Activated T-helper 1 cell treated with anti-CD3 and anti-CD28 coated beads, Interleukin-12 subunit alpha, Interleukin-12 subunit beta, Interleukin-2, Interleukin-4 antibody, amounts not matched to agents 30 ng/mL and 10 ng/mL and 1 ng/mL, durations not matched to agents 14 hours and 24 hours and 36 hours (primary cell): ENCODE measurements at regions of chr20 and their contacts with region 1.

Region 1: GRCh38 chr20:3470627-3471396 is at the start of gene ATRN:
- DNase-seq: peak; percentile 84
- H3K4me3 Mint-ChIP-seq: peak within 1 kb of the TSS; percentile 91
- H3K27ac Mint-ChIP-seq: peak within 1 kb of the TSS; percentile 55
- H3K4me1 Mint-ChIP-seq: peaks cover 28% of the 10 kb centered on the region
- H3K27me3 Mint-ChIP-seq: peaks cover 12% of the 10 kb centered on the region
- total RNA-seq, gene ATRN: 10.9 and 11.9 TPM in 2 replicates

Region 2: DNA sequence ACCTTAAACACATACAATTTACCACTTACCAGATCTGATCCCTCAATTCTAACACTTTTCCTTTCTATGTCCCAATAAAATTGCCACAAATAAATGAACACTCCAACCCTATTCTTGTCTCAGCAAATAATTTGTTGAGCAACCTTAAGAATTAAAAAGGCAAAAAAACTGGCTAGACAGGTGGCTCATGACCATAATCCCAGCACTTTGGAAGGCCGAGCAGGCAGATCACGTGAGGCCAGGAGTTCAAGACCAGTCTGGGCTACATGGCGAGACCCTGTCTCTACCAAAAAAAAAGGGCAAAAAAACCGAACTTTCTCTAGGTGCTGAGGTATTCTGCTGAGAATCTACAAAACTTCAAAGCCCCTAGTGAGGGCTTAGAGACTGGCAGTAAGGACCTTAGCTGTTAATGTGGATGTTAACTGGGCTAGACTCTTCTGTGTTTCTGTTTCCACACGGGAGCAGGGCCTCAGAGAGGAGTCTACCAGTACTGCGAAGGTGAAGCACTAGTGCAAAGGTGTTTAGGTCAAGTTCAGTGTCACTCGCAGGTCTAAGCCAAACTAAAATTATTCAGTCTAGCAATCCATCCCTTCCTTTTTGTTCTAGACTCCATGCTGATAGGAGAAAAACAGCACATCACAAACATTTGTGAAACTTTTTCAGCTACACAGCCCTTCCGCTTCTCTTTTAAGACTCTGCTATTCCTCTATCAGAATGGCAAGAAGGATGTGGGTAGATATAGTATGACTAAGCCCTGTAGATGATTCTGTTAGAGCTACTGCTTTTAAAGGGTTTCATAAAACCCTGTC is 313.8 kb before region 1 on chr20:
- intact Hi-C with region 1: loop called (anchors 5 kb)
- DNase-seq: no peak
- H3K4me3 Mint-ChIP-seq: peak overlapping the region; percentile 78
- H3K27ac Mint-ChIP-seq: peak overlapping the region; percentile 90
- H3K4me1 Mint-ChIP-seq: peaks cover 44% of the 10 kb centered on the region
- H3K27me3 Mint-ChIP-seq: no peaks in the 10 kb centered on the region

Region 3: DNA sequence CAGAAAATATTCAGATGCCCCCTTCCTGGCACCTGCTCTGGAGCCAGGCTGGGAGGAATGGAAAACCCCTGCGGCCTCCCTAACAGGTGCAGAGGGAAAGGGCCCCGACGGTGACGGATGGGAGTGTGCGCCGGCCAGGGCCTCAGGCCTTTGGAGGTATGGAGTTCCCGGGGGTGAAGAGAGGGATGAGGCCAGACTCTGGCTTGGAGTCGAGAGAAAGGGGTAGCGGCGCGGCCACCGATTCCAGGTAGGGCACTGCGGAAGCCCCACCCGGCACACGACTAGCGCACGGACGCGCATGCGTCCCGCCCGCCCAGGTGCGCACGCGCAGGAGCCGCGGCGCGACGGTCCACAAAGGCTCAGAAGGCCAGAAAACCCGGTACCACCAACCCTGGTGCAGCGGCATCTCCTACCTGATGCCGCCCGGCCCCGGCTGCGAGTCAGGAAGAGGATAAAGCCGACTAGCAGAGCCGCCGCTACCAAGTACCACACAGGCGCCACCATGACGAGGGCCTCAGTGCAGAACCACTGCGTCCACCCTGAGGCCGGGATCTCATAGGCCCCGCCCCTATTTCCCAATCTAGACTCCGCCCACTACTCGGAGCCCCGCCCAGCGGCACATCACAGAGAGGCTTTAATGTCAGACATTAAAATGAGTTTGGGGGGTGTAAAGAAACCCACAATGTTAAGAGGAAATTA is 266.5 kb before region 1 on chr20 and contains the start of gene DDRGK1:
- intact Hi-C with region 1: loop called (anchors 10 kb)
- DNase-seq: peak; percentile 86
- H3K4me3 Mint-ChIP-seq: peak within 1 kb of the TSS; percentile 96
- H3K27ac Mint-ChIP-seq: peak within 1 kb of the TSS; percentile 97
- H3K4me1 Mint-ChIP-seq: peaks cover 23% of the 10 kb centered on the region
- H3K27me3 Mint-ChIP-seq: no peaks in the 10 kb centered on the region
- total RNA-seq, gene DDRGK1: 67.5 and 72.3 TPM in 2 replicates

Region 4: DNA sequence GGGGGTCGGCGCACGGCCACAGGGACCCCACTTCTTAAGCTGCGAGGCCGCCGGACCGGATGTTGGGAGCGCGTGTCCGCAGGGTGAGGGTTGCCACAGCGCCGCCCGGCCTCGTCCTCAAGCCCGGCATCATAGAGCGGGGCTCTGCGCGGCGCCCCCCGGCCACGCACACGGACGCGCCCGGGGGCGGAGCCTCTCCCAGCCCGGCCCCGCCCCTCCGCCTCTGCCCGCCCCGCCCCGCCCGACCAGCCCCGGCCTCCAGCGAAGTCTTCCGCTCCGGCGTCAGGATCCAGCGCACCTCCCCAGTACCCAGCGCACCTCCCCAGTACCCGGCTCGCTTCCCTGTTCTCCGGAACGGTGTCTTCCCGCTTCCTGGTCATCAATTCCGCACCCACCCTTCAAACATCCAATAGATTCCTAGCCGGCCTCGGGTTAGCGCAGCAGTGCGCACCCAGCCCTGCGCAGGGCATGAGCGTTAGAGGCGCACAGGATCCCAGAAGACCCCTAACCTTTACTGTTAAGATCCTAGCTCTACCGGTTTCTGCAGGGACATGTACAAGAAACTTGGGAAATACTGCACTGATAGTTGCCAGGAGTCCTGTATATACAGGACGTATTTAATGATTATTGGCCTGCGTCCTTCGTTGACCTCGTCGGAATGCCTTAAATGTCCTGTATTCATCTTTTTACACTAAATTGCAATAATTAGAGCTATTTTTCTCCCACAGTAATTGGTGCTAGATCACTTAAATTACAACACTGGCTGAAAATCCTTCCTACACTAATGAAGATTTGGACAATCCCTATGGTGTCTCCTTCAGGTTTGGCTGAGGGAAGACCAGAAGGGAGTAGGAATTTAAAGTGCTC is 62.8 kb before region 1 on chr20:
- intact Hi-C with region 1: loop called (anchors 1 kb)
- DNase-seq: peak; percentile 63
- H3K4me3 Mint-ChIP-seq: peak overlapping the region; percentile 95
- H3K27ac Mint-ChIP-seq: peak overlapping the region; percentile 93
- H3K4me1 Mint-ChIP-seq: peaks cover 32% of the 10 kb centered on the region
- H3K27me3 Mint-ChIP-seq: peaks cover 26% of the 10 kb centered on the region

Region 5: DNA sequence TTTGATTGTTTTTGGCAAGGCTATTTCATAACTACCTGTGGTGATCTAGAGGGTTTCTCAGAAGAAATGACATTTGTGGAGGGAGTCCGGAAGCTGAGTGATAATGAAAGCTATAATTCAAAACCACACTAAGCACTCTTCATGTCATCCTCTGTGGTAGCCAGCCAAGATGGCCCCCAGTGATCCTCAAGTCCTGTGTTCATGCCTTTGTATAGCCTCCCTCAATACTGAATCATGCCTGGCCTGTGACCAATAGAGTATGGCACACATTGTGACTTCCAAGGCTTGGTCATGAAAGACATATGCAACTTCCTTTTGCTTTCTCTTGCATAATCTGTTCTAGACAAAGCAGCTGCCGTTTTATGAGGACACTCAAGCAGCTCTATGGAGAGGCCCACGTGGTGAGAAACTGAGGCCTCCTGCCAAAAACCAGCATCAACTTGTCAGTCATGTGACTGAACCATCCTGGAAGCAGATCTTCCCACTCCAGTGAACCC is 50.6 kb before region 1 on chr20:
- intact Hi-C with region 1: loop called (anchors 1 kb)
- DNase-seq: peak; percentile 62
- H3K4me3 Mint-ChIP-seq: peak overlapping the region; percentile 40
- H3K27ac Mint-ChIP-seq: peak overlapping the region; percentile 80
- H3K4me1 Mint-ChIP-seq: peaks cover 10% of the 10 kb centered on the region
- H3K27me3 Mint-ChIP-seq: peaks cover 4% of the 10 kb centered on the region

Region 6: GRCh38 chr20:3532089-3532615 is 61.3 kb after region 1 on chr20:
- intact Hi-C with region 1: no loop called
- DNase-seq: no peak
- H3K4me3 Mint-ChIP-seq: no peak overlapping the region
- H3K27ac Mint-ChIP-seq: no peak overlapping the region
- H3K4me1 Mint-ChIP-seq: no peaks in the 10 kb centered on the region
- H3K27me3 Mint-ChIP-seq: no peaks in the 10 kb centered on the region

Region 7: GRCh38 chr20:3811467-3812258 is 340.9 kb after region 1 on chr20:
- intact Hi-C with region 1: loop called (anchors 10 kb)
- DNase-seq: peak; percentile 77
- H3K4me3 Mint-ChIP-seq: peak overlapping the region; percentile 75
- H3K27ac Mint-ChIP-seq: peak overlapping the region; percentile 92
- H3K4me1 Mint-ChIP-seq: peaks cover 65% of the 10 kb centered on the region
- H3K27me3 Mint-ChIP-seq: no peaks in the 10 kb centered on the region

Region 8: DNA sequence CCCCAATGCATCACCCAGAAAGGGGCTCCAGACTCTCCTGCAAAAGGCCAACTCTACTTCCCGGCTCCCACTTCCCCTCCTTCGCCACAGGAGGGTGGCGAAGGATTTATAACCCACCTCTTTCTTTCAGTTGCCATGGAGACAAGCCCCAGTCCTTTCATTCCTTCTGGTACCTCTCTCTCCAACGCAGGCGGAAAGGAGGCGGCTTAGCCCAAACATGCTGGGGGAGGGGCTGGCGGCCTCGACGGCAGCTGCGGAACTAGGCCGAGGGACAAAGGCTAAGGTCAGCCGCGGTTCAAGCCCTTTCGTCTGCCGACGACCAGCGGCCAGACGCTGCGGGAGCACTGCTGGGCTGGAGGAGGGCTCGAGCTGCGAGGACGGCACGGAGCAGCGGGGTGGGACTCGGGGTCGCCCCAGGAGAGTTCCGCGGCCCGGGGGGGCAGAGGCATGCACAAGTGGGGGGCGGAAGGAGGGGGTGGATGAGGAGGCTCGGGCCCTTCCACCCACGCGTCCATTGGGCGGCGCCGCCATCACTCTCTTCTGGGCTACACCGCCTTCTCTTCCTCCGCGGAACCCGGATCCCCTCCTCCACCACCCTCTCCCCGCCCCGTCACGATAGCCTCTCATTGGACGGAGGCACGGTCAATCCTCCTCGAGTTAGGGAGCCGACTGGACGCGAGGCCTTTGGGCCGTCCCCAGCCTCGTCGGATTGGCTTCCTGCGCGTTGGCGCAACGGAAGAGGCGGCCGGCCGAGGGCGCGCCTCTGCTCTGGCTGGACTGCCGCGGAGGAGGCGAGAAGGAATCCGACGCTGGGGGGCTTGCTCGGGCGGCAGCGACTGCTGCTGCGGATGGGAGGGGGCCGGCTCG is 418.0 kb after region 1 on chr20 and contains the start of gene PANK2:
- intact Hi-C with region 1: no loop called
- DNase-seq: peak; percentile 98
- H3K4me3 Mint-ChIP-seq: peak within 1 kb of the TSS; percentile 100
- H3K27ac Mint-ChIP-seq: peak within 1 kb of the TSS; percentile 98
- H3K4me1 Mint-ChIP-seq: peaks cover 44% of the 10 kb centered on the region
- H3K27me3 Mint-ChIP-seq: no peaks in the 10 kb centered on the region
- total RNA-seq, gene PANK2: 51.4 and 54.6 TPM in 2 replicates